ENCODE measurements at regions of chr15 and their contacts with region 1.

Region 1: DNA sequence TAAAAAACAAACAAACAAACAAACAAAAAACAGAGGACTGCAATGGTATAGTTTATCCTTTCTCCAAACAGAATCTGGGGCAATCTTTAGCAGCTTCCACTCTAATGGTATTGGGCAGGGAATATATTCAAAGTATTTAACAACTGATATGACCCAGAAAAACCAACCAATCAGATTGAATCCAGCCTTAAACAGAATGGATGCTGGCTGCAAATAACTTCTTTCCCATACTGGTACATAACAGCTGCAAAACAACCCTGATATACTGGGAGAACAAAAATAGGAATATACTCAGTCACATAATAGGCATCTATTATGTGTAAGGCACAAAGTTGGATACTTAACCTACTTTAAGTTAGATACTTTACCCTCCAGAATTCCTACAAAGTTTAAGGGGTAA is 49.1 kb downstream of the UBR1 start:
- DNase-seq: no peak
- H3K4me3 ChIP-seq: no peak overlapping the region
- H3K27ac ChIP-seq: no peak overlapping the region
- H3K4me1 ChIP-seq: no peaks in the 10 kb centered on the region
- H3K27me3 ChIP-seq: no peaks in the 10 kb centered on the region
- CTCF ChIP-seq: no peak
- POLR2A ChIP-seq: no peak

Region 2: GRCh38 chr15:42955518-42955917 is 101.2 kb before region 1 on chr15:
- CTCF ChIA-PET with region 1: no interaction called
- POLR2A ChIA-PET with region 1: no interaction called
- dilution Hi-C with region 1: no loop called
- intact Hi-C with region 1: no loop called
- DNase-seq: no peak
- H3K4me3 ChIP-seq: no peak overlapping the region
- H3K27ac ChIP-seq: no peak overlapping the region
- H3K4me1 ChIP-seq: peaks cover 4% of the 10 kb centered on the region
- H3K27me3 ChIP-seq: no peaks in the 10 kb centered on the region
- CTCF ChIP-seq: no peak
- POLR2A ChIP-seq: no peak

Region 3: GRCh38 chr15:43070893-43071292 is 14.2 kb after region 1 on chr15:
- CTCF ChIA-PET with region 1: interaction called, 11 read pairs
- POLR2A ChIA-PET with region 1: no interaction called
- dilution Hi-C with region 1: no loop called
- intact Hi-C with region 1: no loop called
- DNase-seq: no peak
- H3K4me3 ChIP-seq: no peak overlapping the region
- H3K27ac ChIP-seq: no peak overlapping the region
- H3K4me1 ChIP-seq: no peaks in the 10 kb centered on the region
- H3K27me3 ChIP-seq: no peaks in the 10 kb centered on the region
- CTCF ChIP-seq: no peak
- POLR2A ChIP-seq: no peak